GM10248 (cell line): ENCODE measurements at regions of chr15 and their contacts with region 1.

Region 1: GRCh38 chr15:51286791-51287190 is 51.6 kb downstream of the CYP19A1 start:
- DNase-seq: peak; percentile 37
- CTCF ChIP-seq: peak; percentile 27

Region 2: DNA sequence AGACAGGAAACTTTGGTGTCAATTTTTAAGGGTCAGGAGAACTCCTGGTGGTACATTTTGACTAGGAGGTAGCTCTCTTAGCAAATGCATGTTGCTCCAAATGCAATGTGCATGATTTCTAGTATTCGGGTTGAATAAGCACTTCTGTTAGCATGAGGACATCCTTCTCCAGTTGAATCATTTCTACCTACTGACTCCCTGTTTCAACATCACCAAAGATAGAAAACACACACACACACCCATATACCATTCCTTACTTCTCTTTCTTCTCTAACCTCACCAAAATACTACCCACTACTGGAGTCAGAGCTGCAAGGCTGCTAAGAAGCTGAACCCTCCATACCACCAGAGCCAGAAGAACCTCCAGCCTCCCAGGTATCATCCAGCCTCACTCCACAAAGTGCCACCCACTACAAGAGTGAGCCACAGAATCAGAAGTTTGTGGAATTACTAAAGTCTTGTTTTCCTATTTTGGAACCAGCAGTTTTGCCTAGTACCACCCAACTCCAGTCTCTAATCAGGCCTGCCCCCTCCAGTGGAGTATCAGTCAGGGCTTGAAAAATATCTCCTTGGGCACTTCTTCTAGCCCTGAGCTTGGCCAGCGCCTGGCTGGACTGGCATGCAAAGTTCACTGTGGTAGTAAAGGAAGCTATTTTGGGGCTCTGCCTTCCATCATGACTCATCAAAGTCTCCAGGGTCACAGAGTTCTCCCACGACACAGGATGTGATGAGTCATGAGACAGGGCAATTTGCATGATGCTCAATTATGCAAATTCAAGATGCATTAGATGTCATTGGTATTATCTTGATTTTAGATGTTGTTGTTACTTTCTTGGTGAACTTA is 58.6 kb before region 1 on chr15:
- CTCF ChIA-PET with region 1: interaction called, 18 read pairs
- POLR2A ChIA-PET with region 1: no interaction called
- DNase-seq: peak; percentile 72
- CTCF ChIP-seq: no peak

Region 3: DNA sequence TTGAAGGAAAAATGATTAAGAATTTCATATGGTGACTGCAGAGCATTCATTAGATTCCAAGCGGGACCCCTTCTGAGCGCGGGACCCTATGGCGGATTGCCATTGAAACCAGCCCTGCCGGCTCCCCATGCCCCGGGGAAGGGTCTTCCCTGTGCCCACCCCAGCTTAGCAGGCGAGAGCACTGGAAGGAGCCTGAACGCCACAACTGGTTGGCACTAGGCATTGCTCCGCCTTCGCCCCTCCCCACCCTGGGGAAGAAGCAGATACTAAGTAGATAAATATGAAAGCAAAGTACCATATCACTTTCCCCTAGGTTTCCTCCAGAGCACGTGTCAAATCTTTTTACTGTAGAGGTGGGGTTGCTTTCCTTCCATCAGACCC is 19.1 kb before region 1 on chr15:
- CTCF ChIA-PET with region 1: interaction called, 22 read pairs
- POLR2A ChIA-PET with region 1: no interaction called
- DNase-seq: no peak
- CTCF ChIP-seq: no peak

Region 4: GRCh38 chr15:51299187-51300066 is 12.6 kb after region 1 on chr15:
- CTCF ChIA-PET with region 1: interaction called, 20 read pairs
- POLR2A ChIA-PET with region 1: no interaction called
- DNase-seq: no peak
- CTCF ChIP-seq: no peak

Region 5: DNA sequence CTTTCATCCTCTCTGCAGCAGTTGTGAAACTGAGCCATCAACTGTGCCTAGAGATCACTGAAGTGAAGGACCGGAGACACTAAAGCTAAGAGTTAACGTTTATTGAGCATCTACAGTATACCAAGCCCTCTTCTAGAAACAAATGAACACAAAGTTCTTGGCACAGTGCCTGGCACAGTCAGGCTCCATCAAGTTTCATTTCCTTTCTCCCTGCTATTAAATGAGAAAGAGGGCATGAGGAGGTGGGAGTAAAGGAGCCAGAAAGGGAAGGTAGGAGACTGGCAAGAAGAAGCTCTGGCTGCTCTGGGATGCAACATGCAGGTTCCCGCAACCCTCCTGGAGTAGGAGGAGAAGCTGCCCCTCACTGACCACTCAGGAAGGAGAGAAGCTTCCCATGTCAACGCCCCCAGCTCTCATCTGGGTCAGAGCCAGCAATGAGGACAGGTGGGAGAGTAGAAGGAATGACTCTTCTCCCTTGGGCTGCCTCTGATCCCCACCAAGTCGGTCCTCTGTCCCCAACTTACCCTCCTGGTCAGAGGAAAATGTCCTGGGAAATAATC is 21.1 kb after region 1 on chr15:
- CTCF ChIA-PET with region 1: interaction called, 14 read pairs
- POLR2A ChIA-PET with region 1: no interaction called
- DNase-seq: no peak
- CTCF ChIP-seq: no peak